Dorsolateral prefrontal cortex (tissue), 120 donors: ENCODE measurements at regions of chr1 and their contacts with region 1.

Region 1: DNA sequence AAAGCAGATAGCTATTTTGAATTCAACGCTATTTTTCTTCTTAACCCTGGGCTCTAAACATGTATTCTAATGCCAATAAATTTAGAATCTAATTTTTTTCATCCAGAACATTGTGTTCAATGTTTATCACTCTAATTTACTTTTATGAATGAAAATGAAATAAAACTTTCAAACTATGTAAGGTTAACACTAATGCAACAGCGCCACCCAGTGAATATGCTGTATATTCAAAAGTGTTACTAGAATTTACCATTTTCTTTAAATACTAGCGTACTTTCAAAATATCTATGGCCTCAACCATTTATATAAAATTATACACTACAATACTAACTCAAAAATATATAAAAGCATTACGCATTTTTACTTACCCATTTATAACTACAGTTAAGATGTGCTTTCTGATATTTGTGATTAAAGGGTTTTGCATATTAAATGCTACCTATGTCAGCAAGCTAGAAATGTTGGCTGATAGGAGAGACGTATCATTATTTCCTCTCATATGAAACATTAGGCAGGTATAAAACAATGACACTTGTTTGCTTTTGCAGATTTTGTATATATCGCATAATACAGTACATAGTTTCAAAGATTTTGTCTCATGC is 5.9 kb upstream of the NUF2 start:
- DNase-seq: peak in 1 of 10 donors; percentile 5
- H3K4me3 ChIP-seq: no peak overlapping the region
- H3K27ac ChIP-seq: no peak overlapping the region
- H3K27me3 ChIP-seq: no peaks in the 10 kb centered on the region
- CTCF ChIP-seq: peak; percentile 64 to 92 (median 82)

Region 2: GRCh38 chr1:162854245-162854882 is 461.5 kb before region 1 on chr1:
- intact Hi-C with region 1: loop called (anchors 5 kb)
- DNase-seq: peak in 8 of 10 donors; percentile 22 to 83 (median 57)
- H3K4me3 ChIP-seq: no peak overlapping the region
- H3K27ac ChIP-seq: no peak overlapping the region
- H3K27me3 ChIP-seq: no peaks in the 10 kb centered on the region
- CTCF ChIP-seq: peak; percentile 64 to 88 (median 75)

Region 3: GRCh38 chr1:163071405-163072255 is 244.2 kb before region 1 on chr1:
- intact Hi-C with region 1: loop called in 1 of 2 experiments (anchors 10 kb)
- DNase-seq: peak in 7 of 10 donors; percentile 22 to 63 (median 56)
- H3K4me3 ChIP-seq: peak overlapping the region in 58 of 59 donors; percentile 18 to 78 (median 56)
- H3K27ac ChIP-seq: peak overlapping the region in 41 of 59 donors; percentile 1 to 91 (median 67)
- H3K27me3 ChIP-seq: peaks cover 0 to 14% (median 0%) of the 10 kb centered on the region in 45 donors
- CTCF ChIP-seq: peak in 54 of 56 donors; percentile 31 to 73 (median 47)

Region 4: DNA sequence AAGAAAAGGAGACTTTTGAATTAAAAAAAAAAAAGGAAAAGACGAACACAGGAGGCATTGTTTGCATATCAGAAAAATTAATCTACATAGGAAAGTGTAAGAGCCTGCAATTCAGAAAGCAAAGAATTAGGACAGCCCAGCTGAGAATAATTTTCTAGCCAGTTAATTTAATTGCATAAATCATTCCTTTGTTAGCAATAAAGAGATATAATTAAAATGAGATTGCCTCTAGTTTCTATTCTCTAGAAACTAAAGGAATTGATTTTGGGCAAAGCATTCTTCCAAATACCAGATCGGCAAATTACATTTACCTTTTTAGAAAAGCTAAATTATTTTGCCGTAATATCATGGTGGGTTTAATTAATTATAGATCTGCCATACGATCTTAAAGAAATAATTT is 51.8 kb after region 1 on chr1:
- intact Hi-C with region 1: no loop called
- DNase-seq: no peak
- H3K4me3 ChIP-seq: peak overlapping the region in 2 of 59 donors; percentile 5 to 27
- H3K27ac ChIP-seq: peak overlapping the region in 48 of 59 donors; percentile 3 to 84 (median 58)
- H3K27me3 ChIP-seq: no peaks in the 10 kb centered on the region
- CTCF ChIP-seq: no peak

Region 5: DNA sequence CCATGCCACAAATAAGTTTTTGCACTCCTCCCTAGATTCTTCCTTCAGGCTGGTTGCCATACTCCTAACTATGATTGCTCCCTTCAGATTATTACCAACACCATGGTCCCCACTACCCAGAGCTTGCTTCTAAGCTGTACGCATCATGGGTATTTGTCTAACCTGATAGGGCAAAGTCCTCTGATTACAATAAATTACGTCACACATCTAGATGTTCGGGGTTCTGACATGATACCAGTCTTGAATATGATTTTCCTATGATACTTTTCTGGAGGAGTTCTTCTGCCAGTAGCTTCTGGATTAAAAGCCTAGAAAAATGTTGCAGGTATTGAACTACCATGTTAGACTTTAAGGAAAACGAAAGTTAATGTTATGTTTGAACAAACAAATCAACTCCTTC is 73.1 kb after region 1 on chr1:
- intact Hi-C with region 1: no loop called
- DNase-seq: no peak
- H3K4me3 ChIP-seq: no peak overlapping the region
- H3K27ac ChIP-seq: no peak overlapping the region
- H3K27me3 ChIP-seq: no peaks in the 10 kb centered on the region
- CTCF ChIP-seq: no peak

Region 6: DNA sequence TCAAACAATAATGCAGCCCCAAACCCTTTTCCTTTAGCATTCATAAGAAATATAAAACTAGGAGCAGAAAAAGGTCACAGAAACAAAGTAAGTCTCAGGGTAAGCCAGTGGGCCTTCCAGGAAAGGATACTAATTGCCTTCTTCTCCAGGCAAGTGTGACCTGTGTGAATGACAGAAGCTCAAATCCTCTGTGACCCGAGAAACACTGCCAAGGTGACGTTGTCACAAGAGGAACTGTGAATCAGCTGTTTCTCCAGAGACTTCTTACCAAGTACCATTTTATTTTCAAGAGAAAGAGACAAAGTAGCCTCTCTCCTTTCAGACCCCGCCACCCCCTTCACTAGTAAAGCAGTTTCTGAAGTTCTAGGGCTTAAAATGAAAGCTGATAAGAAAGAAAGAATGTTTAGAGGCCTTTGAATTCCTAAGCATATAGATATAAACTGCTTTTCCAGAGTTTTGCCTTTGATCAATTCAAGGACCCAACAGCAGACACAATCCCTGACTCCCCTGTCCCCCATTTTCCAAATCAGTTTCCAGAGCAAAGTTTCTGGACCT is 161.5 kb after region 1 on chr1:
- intact Hi-C with region 1: no loop called
- DNase-seq: no peak
- H3K4me3 ChIP-seq: no peak overlapping the region
- H3K27ac ChIP-seq: no peak overlapping the region
- H3K27me3 ChIP-seq: no peaks in the 10 kb centered on the region
- CTCF ChIP-seq: no peak

Region 7: GRCh38 chr1:163999131-163999530 is 683.3 kb after region 1 on chr1:
- intact Hi-C with region 1: no loop called
- DNase-seq: no peak
- H3K4me3 ChIP-seq: no peak overlapping the region
- H3K27ac ChIP-seq: no peak overlapping the region
- H3K27me3 ChIP-seq: no peaks in the 10 kb centered on the region
- CTCF ChIP-seq: no peak